HepG2 (cell line): ENCODE measurements at regions of chr1 and their contacts with region 1.

Region 1: DNA sequence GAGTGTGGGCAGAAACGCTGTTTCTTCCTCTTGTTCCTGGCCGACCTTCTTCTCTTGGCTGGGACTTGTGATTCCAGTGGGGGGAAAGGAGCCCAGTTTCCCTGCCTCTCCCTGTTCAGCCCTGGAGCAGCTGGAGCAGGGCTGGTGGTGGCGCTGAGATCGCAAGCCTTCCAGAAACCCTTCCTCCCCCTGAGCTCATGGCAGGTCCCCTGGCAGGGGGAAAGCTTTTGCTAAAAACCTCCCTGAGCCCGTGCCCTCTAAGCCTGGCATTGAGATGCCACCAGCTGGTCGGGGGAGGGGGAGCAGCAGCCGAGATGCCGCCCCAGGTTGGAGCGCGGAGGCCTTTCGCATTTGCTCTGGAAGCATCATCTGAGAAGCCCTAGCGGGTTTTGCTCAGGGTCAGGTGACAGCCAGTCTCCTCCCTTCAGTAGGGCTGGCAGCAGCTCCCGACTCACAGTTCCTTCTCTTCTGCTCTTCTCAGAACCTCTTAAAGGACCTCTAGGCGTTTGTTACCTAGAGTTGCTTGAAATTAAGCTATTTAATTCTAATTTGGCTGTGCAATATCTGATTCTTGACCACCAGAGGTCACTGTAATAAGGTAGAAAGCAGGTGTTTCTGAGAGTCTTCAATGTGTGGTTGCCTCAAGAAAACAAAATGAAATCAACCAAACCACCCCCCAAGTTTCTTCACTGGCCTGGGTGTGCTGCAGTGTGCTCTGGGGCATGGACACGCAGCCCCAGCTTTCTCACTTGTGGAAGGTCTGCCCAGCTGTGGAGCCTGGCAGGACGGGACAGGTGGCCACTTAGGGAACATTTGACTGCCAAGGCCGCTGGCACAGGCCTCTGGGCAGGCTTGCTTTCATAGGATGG is 257.3 kb downstream of the CAMTA1 start:
- DNase-seq: peak; percentile 12
- ATAC-seq: peak; percentile 31; the same call in 2 of the 3 replicates
- H3K4me3 ChIP-seq: no peak overlapping the region
- H3K27ac ChIP-seq: no peak overlapping the region
- H3K4me1 ChIP-seq: no peaks in the 10 kb centered on the region
- H3K27me3 ChIP-seq: peaks cover 1 to 22% of the 10 kb centered on the region in 2 experiments; a peak in 3 of 5 replicates
- CTCF ChIP-seq: peak; percentile 54
- EP300 ChIP-seq: no peak
- POLR2A ChIP-seq: no peak
- RAD21 ChIP-seq: no peak

Region 2: DNA sequence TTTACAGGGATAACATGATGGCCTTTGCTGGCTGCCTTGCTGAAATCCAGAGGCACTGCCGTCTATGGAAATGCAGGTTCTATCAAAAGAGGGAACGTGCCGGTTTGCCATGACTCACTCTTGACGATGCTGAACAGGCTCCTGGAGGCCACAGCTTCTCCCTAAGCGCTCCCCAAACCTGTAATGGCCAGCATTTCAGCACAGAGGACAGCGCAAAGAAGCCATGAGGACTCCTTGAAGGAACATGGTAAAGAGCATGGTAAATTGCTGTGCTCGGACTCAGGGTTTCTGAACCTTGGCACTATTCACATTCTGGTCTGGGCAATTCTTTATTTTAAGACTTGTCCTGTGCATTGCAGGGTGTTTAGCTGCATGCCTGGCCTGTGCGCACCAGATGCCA is 39.8 kb before region 1 on chr1:
- CTCF ChIA-PET with region 1: no interaction called
- POLR2A ChIA-PET with region 1: no interaction called
- in situ Hi-C with region 1: no loop called
- intact Hi-C with region 1: no loop called
- DNase-seq: no peak
- ATAC-seq: no peak
- H3K4me3 ChIP-seq: no peak overlapping the region
- H3K27ac ChIP-seq: no peak overlapping the region
- H3K4me1 ChIP-seq: no peaks in the 10 kb centered on the region
- H3K27me3 ChIP-seq: peaks cover 5 to 38% of the 10 kb centered on the region in 2 experiments; a peak in 4 of 5 replicates
- CTCF ChIP-seq: no peak
- EP300 ChIP-seq: no peak
- POLR2A ChIP-seq: no peak
- RAD21 ChIP-seq: no peak

Region 3: DNA sequence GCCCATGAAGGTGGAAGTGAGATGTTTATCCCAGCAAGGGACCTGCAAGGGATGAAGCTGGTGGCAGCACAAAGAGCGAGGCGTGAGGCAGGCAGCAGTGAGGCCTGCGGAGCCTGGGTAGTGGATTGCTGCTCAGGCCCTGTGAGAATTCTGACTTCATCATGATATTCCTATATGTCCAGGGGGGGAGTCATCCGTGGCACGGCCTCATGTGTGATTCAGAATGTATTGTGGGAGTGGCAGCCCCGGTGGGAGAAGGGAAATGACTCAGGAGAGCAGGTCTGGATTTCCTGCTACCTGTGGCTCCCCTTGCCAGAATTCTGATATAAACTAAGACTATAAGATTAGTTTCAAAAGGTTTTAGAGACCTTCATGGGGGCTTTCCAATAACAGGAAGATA is 16.4 kb before region 1 on chr1:
- CTCF ChIA-PET with region 1: no interaction called
- POLR2A ChIA-PET with region 1: no interaction called
- in situ Hi-C with region 1: no loop called
- intact Hi-C with region 1: no loop called
- DNase-seq: no peak
- ATAC-seq: no peak
- H3K4me3 ChIP-seq: no peak overlapping the region
- H3K27ac ChIP-seq: no peak overlapping the region
- H3K4me1 ChIP-seq: no peaks in the 10 kb centered on the region
- H3K27me3 ChIP-seq: peaks cover 1 to 10% of the 10 kb centered on the region in 2 experiments; a peak in 2 of 5 replicates
- CTCF ChIP-seq: no peak
- EP300 ChIP-seq: no peak
- POLR2A ChIP-seq: no peak
- RAD21 ChIP-seq: no peak

Region 4: DNA sequence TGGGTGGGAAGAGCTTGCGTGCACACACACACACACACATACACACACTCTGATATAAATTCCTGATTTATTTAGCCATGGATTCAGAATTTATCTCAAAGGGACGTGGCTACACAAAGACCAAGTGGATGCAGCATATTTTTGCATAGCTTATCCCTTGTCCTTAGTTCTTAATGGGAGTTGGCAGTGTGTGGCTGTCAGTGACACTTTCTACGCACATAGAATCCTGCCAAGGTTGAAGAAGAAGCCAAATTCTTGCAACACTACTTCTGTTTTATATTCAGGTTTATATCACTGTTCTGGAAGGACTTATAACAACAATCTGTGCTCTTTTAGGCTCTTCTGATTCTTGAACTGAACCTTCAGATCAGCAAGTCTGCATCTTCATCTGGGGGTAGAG is 35.4 kb after region 1 on chr1:
- CTCF ChIA-PET with region 1: no interaction called
- POLR2A ChIA-PET with region 1: no interaction called
- in situ Hi-C with region 1: no loop called
- intact Hi-C with region 1: no loop called
- DNase-seq: no peak
- ATAC-seq: no peak
- H3K4me3 ChIP-seq: no peak overlapping the region
- H3K27ac ChIP-seq: no peak overlapping the region
- H3K4me1 ChIP-seq: no peaks in the 10 kb centered on the region
- H3K27me3 ChIP-seq: no peaks in the 10 kb centered on the region
- CTCF ChIP-seq: no peak
- EP300 ChIP-seq: no peak
- POLR2A ChIP-seq: no peak
- RAD21 ChIP-seq: no peak

Region 5: GRCh38 chr1:7089497-7089896 is 46.9 kb after region 1 on chr1:
- CTCF ChIA-PET with region 1: no interaction called
- POLR2A ChIA-PET with region 1: no interaction called
- in situ Hi-C with region 1: no loop called
- intact Hi-C with region 1: no loop called
- DNase-seq: no peak
- ATAC-seq: no peak
- H3K4me3 ChIP-seq: no peak overlapping the region
- H3K27ac ChIP-seq: no peak overlapping the region
- H3K4me1 ChIP-seq: no peaks in the 10 kb centered on the region
- H3K27me3 ChIP-seq: peaks cover 2 to 48% of the 10 kb centered on the region in 2 experiments; a peak in 4 of 5 replicates
- CTCF ChIP-seq: no peak
- EP300 ChIP-seq: no peak
- POLR2A ChIP-seq: no peak
- RAD21 ChIP-seq: no peak

Region 6: DNA sequence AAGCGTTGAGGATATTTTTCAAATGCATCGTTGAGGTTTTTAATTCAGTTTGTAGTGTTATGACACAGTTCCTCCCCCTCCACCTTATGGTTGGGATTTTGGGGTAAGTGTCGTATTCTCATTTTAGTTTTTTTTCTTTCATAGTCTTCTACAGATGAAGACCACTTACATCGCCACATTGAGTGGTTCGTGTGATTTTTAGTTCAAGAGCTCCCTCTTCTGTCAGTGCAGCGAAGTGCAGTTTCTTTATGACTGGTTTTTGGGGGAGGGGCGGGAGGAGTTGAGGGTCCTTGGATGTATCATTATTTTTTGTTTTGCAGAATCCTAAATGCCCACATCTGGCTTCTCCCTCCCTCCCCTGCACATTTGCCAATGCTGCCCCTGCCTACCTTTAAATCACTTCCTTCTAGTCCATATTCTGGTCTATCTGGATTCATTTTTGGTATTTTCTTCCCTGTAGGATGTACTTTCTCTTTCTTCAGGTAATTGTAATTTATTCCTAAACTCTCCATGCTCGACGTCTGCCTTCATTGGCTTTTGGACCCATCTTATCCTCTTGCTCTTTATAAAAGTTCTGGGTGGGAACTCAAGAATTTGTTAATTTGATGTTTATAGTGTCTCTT is 175.8 kb after region 1 on chr1:
- CTCF ChIA-PET with region 1: interaction called, 9 read pairs
- POLR2A ChIA-PET with region 1: no interaction called
- in situ Hi-C with region 1: loop called (anchors 5 kb)
- intact Hi-C with region 1: loop called (anchors 1 kb)
- DNase-seq: peak; percentile 44
- ATAC-seq: no peak
- H3K4me3 ChIP-seq: no peak overlapping the region
- H3K27ac ChIP-seq: no peak overlapping the region
- H3K4me1 ChIP-seq: no peaks in the 10 kb centered on the region
- H3K27me3 ChIP-seq: peaks cover 2 to 13% of the 10 kb centered on the region in 2 experiments; a peak in 4 of 5 replicates
- CTCF ChIP-seq: peak; percentile 79
- EP300 ChIP-seq: no peak
- POLR2A ChIP-seq: no peak
- RAD21 ChIP-seq: peak; percentile 56; the same call in 1 of the 2 replicates